Heart left ventricle (tissue), 16 donors: ENCODE measurements at regions of chr18 and their contacts with region 1.

Region 1: DNA sequence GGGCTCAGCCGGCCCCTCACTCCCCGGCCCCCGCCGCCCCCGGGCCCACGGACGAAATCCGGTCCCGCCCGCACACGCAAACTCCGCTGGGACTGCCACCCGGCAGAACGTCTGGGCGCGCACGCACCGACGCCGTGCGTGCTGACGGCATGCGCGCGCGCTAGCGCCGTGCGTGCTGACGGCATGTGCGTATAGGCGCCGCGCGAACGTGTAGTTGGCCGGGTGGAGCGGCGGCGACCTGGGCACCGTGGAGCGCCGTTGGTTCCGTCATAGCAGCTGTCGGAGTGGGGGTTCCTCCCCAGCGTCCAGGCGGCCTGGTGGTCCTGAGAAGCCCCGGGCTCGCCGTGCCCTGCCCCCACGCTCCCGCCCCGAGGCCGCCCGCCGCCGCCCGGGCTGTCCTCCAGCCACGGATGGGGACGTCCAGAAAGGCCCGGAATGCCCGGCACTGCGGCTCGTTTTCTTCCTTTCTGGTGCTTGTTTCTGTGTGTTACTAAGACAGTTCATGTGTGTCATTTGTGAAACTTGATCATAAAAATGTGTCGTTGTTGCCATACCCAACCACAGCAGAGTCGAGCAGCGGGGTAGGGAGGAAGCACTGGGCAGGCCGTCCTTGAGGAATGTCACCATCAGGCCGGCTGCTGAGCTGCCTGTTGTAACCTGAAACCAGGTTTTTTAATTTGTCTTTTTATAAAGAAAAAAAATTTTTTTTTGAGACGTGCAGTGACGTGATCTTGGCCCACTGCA is at the start of gene TXNL4A:
- DNase-seq: peak; percentile 86 to 93 (median 90)
- ATAC-seq: peak; percentile 97 to 99 (median 98)
- H3K4me3 ChIP-seq: peak within 1 kb of the TSS; percentile 67 to 99 (median 92)
- H3K27ac ChIP-seq: peak within 1 kb of the TSS; percentile 84 to 99 (median 96)
- H3K4me1 ChIP-seq: peaks cover 0 to 40% (median 19%) of the 10 kb centered on the region in 12 donors
- H3K27me3 ChIP-seq: no peaks in the 10 kb centered on the region
- CTCF ChIP-seq: no peak
- POLR2A ChIP-seq: peak; percentile 58 to 94
- total RNA-seq, gene TXNL4A: 35.2 to 113 (median 90.9) TPM

Region 2: DNA sequence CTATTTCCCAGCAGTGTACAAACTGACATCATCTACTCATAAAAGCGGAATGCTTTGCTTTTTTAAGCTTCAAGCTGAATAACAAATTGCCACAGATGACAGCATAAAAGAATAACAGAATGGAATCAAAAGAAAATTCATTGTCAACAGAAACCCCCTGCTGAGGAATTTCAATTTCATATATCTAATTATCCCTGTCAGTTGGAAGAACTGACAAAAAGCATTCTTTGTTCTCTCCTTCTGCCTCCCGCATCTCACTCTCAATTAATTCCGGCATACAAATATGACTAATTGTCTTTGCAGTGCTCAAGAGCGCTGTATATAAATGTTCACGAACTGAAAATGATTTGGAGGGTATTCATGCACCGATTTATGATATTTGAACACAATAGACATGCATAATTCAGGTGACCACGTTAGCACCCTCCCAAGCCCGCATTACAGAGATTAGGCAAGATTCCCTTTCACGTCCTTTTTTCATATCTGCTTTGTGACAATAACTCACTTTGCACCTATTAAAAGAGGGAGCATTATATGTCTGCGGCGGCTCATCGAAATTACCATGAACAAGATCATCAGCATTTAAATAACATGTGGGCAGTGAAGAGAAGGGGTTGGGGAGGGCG is 1286.7 kb before region 1 on chr18:
- intact Hi-C with region 1: no loop called
- DNase-seq: no peak
- ATAC-seq: no peak
- H3K4me3 ChIP-seq: no peak overlapping the region
- H3K27ac ChIP-seq: no peak overlapping the region
- H3K4me1 ChIP-seq: no peaks in the 10 kb centered on the region
- H3K27me3 ChIP-seq: peaks cover 0 to 18% (median 0%) of the 10 kb centered on the region in 9 donors
- CTCF ChIP-seq: no peak
- POLR2A ChIP-seq: no peak

Region 3: GRCh38 chr18:79819968-79820351 is 168.7 kb before region 1 on chr18:
- intact Hi-C with region 1: no loop called
- DNase-seq: peak in 1 of 5 donors; percentile 58
- ATAC-seq: peak; percentile 26 to 77 (median 63)
- H3K4me3 ChIP-seq: no peak overlapping the region
- H3K27ac ChIP-seq: no peak overlapping the region
- H3K4me1 ChIP-seq: peaks cover 0 to 30% (median 0%) of the 10 kb centered on the region in 12 donors
- H3K27me3 ChIP-seq: peaks cover 0 to 10% (median 0%) of the 10 kb centered on the region in 9 donors
- CTCF ChIP-seq: no peak
- POLR2A ChIP-seq: no peak

Region 4: DNA sequence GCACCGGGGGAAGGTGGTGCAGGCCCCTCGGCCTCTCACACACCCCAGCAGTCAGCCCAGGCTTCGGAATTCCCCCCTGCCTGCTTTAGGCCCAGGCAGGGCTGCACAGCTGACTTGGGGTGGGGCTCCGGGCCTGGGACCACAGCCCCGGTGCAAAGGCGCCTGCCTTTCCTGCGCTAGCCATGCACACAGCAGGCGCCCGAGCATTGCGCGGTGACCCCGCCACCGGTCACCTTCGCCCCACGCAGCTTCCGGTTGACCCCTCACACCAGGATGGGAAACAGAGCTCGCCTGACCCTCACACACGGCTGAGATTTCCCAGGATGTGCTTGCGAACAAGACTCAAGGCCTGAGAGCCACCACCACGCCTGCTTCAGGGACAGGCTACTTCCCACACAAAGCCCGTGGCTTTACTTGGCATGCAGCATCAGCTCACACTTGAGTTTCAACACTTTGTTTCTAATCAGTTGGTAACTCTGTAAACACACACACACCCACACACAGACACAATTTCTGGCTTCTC is 83.2 kb before region 1 on chr18:
- intact Hi-C with region 1: loop called in 1 of 10 experiments (anchors 10 kb)
- DNase-seq: peak in 3 of 5 donors; percentile 19 to 28 (median 25)
- ATAC-seq: peak in 1 of 4 donors; percentile 21
- H3K4me3 ChIP-seq: no peak overlapping the region
- H3K27ac ChIP-seq: no peak overlapping the region
- H3K4me1 ChIP-seq: peaks cover 0 to 4% (median 0%) of the 10 kb centered on the region in 12 donors
- H3K27me3 ChIP-seq: no peaks in the 10 kb centered on the region
- CTCF ChIP-seq: no peak
- POLR2A ChIP-seq: no peak

Region 5: DNA sequence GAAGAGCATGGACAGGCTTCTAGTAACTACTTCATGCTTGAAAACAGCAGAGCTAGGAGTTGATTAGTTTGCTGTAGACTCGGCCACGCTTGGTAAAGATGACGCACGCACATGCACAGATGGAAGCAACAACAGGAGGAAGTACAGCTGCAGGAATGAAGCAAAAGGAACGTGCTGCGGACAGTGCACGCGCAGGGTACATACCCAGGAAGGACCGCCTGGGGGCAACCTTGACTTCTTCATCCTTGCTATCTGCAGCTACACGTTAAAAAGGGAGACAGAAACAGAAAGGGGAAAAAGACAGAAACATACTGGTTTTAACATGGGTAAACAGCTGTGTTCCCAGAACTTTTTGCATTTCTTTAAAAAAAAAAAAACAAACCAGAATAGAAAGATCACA is 54.9 kb before region 1 on chr18:
- intact Hi-C with region 1: loop called in 1 of 10 experiments (anchors 10 kb)
- DNase-seq: peak in 4 of 5 donors; percentile 15 to 50 (median 26)
- ATAC-seq: peak in 3 of 4 donors; percentile 33 to 59 (median 56)
- H3K4me3 ChIP-seq: peak overlapping the region in 4 of 12 donors; percentile 3 to 13 (median 8)
- H3K27ac ChIP-seq: peak overlapping the region in 10 of 12 donors; percentile 14 to 78 (median 54)
- H3K4me1 ChIP-seq: peaks cover 0 to 23% (median 14%) of the 10 kb centered on the region in 12 donors
- H3K27me3 ChIP-seq: no peaks in the 10 kb centered on the region
- CTCF ChIP-seq: peak in 6 of 12 donors; percentile 13 to 33 (median 24)
- POLR2A ChIP-seq: no peak